ENCODE measurements at regions of chr1 and their contacts with region 1.

Region 1: DNA sequence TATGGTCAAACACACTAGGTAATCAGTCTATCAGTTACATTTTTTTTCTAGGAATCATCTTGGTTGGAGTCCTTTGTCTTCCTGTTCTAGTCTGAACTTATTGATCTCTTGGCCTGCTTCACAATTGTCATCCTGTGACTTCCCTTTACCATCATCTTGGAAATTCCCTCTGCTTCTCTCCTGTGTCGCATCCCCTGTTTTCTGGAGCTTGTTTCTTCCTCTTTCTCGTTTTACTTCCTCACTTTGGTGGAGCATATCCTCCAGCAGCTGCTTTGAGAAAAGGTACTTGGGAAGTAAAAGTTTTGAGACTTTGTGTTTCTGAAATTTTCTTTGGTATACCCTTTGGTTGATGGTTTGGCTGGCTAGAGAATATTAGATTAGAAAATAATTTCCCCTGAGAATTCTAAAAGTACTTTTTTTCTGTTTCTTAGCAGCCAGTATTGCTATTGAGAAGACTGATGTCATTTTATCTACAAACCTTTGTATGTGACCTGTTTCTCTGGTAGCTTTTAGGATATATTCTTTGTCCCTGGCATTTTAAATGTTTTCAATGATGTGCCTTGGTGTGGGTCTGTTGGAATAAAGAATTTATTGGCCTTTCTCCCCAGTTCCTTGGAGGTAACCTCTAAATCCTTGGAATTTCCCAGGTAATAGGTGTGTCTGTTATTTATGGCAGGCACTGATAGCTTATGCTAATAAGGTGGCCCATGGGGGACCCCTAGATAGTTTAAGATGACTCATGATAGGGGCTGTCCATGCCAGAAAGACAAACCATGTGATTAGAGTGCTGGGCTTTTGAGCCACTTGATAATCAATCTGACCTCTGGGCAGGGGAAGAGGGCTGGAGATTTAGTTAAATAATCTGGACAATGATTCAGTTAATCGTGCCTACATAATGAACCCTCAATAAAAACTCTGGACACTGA is 6.1 kb upstream of the MYCL start:
- DNase-seq: no peak
- H3K4me3 ChIP-seq: no peak overlapping the region
- H3K27me3 ChIP-seq: peaks cover 4% of the 10 kb centered on the region
- CTCF ChIP-seq: no peak

Region 2: DNA sequence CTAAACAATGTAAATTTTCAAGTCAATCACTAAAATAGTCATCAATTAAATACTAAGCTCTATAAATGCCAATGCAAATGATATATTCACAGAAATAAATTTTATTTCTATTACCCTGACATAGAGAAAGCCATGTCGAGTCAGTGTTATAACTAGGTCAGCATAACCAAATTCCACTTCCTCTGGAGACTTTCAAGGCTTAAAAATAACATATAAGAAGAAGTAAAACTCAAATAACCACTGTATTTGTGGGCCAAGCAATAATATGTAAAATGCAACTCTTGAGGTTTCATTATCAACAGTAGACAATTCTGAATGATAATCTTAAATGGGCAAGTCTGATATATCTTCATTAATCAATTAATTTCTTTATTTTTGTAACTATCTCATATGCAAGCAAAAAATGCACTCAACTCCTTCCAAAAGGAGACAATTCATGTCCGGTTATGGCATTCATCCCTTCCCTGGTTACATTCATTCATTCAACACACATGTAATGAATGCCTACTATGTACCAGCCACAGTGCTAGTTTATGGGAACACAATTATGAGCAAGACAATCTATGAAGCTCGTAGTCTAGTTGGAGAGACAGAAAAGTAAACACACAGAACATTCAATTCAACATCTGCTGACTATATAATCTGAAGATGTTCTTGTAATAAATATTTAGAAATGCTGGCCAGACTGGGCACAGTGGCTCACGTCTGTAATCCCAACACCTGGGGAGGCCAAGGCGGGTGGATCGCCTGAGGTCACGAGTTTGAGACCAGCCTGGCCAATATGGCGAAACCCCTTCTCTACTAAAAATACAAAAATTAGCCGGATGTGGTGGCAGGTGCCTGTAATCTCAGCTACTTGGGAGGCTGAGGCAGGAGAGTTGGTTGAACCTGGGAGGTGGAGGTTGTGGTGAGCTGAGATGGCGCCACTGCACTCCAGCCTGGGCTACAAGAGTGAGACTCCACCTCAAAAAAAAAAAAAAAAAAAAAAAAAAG is 95.7 kb after region 1 on chr1:
- CTCF ChIA-PET with region 1: no interaction called
- POLR2A ChIA-PET with region 1: interaction called, 14 read pairs
- DNase-seq: no peak
- H3K4me3 ChIP-seq: no peak overlapping the region
- H3K27me3 ChIP-seq: 0 out of 2 replicates have a peak, but pooled peaks cover 2% of the 10 kb centered on the region
- CTCF ChIP-seq: no peak

Measured in BJ (cell line).